ENCODE measurements at regions of chr2 and their contacts with region 1.

Region 1: GRCh38 chr2:20635675-20636584 is 15.0 kb downstream of the HS1BP3 start:
- DNase-seq: peak; percentile 74
- ATAC-seq: peak; percentile 96
- H3K4me3 ChIP-seq: no peak overlapping the region; a peak in 1 of 6 replicates
- H3K27ac ChIP-seq: peak overlapping the region; percentile 23
- H3K4me1 ChIP-seq: peaks cover 55% of the 10 kb centered on the region
- H3K27me3 ChIP-seq: no peaks in the 10 kb centered on the region
- CTCF ChIP-seq: peak; percentile 100
- EP300 ChIP-seq: peak in 1 of 2 experiments; percentile 29; a peak in 1 of 4 replicates
- POLR2A ChIP-seq: no peak
- RAD21 ChIP-seq: peak; percentile 100

Region 2: DNA sequence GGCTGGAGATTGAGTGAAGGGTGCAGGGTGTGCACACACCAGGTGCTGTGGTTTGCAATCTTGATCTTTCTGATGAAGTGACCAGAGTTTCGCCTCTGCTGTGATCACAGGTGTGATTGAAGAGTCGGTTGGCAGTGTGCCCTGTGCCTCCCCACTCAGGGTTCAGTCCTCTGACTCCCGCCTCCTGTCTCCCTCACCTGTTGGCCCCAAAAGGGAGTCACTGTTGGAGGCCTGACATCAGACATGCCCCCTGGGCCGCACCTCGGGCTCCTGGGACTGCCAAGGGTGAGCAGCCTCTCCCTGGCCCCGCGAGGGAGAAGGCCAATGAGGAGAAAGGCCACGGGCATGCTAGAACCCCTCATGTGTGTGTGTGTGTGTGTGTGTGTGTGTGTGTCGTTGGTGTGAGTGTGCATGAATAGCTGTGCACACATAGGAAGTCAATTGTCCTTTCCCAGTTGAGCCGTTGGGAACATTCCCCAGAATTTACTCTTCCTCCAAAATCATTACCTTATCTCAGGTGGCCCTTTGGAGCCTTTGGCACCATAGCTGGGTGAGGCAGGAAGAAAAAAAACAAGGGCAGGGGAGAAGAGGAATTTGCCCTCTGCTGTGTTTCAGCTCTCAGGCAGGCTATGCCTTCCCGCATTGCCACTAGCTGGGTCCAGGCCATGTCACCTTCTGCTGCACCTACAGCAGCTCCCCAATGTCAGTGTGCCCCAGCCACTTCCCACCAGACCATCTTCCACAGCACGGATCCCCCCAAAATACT is 506.4 kb before region 1 on chr2:
- CTCF ChIA-PET with region 1: no interaction called
- POLR2A ChIA-PET with region 1: no interaction called
- in situ Hi-C with region 1: no loop called
- intact Hi-C with region 1: no loop called
- DNase-seq: no peak
- ATAC-seq: peak; percentile 74
- H3K4me3 ChIP-seq: peak overlapping the region in 1 of 3 experiments; percentile 19; a peak in 1 of 6 replicates
- H3K27ac ChIP-seq: no peak overlapping the region
- H3K4me1 ChIP-seq: peaks cover 26% of the 10 kb centered on the region
- H3K27me3 ChIP-seq: peaks cover 0 to 51% of the 10 kb centered on the region in 2 experiments; a peak in 4 of 5 replicates
- CTCF ChIP-seq: no peak
- EP300 ChIP-seq: no peak
- POLR2A ChIP-seq: no peak
- RAD21 ChIP-seq: no peak

Region 3: GRCh38 chr2:20411361-20411894 is 224.5 kb before region 1 on chr2:
- CTCF ChIA-PET with region 1: interaction called, 26 read pairs
- POLR2A ChIA-PET with region 1: interaction called, 18 read pairs
- in situ Hi-C with region 1: no loop called
- intact Hi-C with region 1: loop called (anchors 1 kb)
- DNase-seq: peak; percentile 79
- ATAC-seq: peak; percentile 99
- H3K4me3 ChIP-seq: no peak overlapping the region
- H3K27ac ChIP-seq: no peak overlapping the region
- H3K4me1 ChIP-seq: peaks cover 36% of the 10 kb centered on the region
- H3K27me3 ChIP-seq: no peaks in the 10 kb centered on the region; a peak in 1 of 5 replicates
- CTCF ChIP-seq: peak; percentile 97
- EP300 ChIP-seq: no peak
- POLR2A ChIP-seq: no peak
- RAD21 ChIP-seq: peak; percentile 86

Region 4: GRCh38 chr2:20452551-20452950 is 183.4 kb before region 1 on chr2:
- CTCF ChIA-PET with region 1: interaction called, 5 read pairs
- POLR2A ChIA-PET with region 1: interaction called, 84 read pairs
- in situ Hi-C with region 1: loop called (anchors 5 kb)
- intact Hi-C with region 1: no loop called
- DNase-seq: peak; percentile 65
- ATAC-seq: peak; percentile 27
- H3K4me3 ChIP-seq: no peak overlapping the region
- H3K27ac ChIP-seq: no peak overlapping the region
- H3K4me1 ChIP-seq: peaks cover 57% of the 10 kb centered on the region
- H3K27me3 ChIP-seq: no peaks in the 10 kb centered on the region; a peak in 1 of 5 replicates
- CTCF ChIP-seq: peak; percentile 73
- EP300 ChIP-seq: no peak
- POLR2A ChIP-seq: no peak
- RAD21 ChIP-seq: peak; percentile 53

Region 5: GRCh38 chr2:20525041-20526035 is 110.6 kb before region 1 on chr2:
- CTCF ChIA-PET with region 1: no interaction called
- POLR2A ChIA-PET with region 1: interaction called, 6 read pairs
- in situ Hi-C with region 1: no loop called
- intact Hi-C with region 1: loop called (anchors 5 kb)
- DNase-seq: peak; percentile 96
- ATAC-seq: peak; percentile 96
- H3K4me3 ChIP-seq: peak overlapping the region; percentile 2 to 56 (median 21); a peak in 5 of 6 replicates
- H3K27ac ChIP-seq: peak overlapping the region; percentile 69
- H3K4me1 ChIP-seq: peaks cover 81% of the 10 kb centered on the region
- H3K27me3 ChIP-seq: no peaks in the 10 kb centered on the region
- CTCF ChIP-seq: peak; percentile 80
- EP300 ChIP-seq: peak; percentile 48 to 53; a peak in 3 of 4 replicates
- POLR2A ChIP-seq: peak in 1 of 2 experiments; percentile 70; a peak in 2 of 4 replicates
- RAD21 ChIP-seq: peak; percentile 82

Region 6: DNA sequence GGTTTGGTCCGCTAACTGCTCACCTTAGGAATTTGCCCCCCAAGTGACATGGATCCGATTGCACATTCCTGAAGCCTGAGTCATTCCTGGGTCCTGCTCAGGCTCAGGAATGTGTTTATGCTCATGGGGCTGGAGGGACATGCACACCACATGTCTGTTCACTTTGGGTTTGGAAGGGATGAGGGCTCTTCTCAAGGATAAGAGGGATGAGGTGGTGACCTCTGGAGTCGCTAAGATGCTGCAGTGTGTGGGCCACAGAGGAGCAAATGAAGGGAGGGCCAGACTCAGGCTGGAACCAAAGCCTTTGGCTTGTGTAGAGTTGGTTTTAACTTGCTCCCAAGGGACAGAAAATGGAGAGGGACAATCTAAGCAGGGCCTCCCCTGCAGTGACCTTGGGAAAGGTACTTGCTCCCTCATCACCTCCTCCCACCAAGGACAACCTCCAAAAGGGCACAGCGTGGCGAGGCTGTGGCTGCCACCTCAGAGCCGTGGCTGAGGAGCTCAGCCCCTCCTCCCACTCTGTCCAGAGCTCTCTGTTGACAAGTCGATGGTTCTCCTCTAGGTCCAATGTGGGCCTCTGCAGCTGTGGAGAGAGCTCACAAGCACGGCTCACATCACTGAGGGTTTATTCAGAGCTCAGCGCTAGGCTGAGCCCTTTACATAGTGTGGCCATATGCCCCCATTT is 51.2 kb before region 1 on chr2:
- CTCF ChIA-PET with region 1: no interaction called
- POLR2A ChIA-PET with region 1: interaction called, 14 read pairs
- in situ Hi-C with region 1: no loop called
- intact Hi-C with region 1: loop called (anchors 2 kb)
- DNase-seq: peak; percentile 98
- ATAC-seq: peak; percentile 79
- H3K4me3 ChIP-seq: peak overlapping the region in 1 of 3 experiments; percentile 52; a peak in 2 of 6 replicates
- H3K27ac ChIP-seq: peak overlapping the region; percentile 97
- H3K4me1 ChIP-seq: peaks cover 100% of the 10 kb centered on the region
- H3K27me3 ChIP-seq: no peaks in the 10 kb centered on the region
- CTCF ChIP-seq: peak; percentile 41; the same call in 1 of the 2 replicates
- EP300 ChIP-seq: peak; percentile 63 to 88; a peak in 3 of 4 replicates
- POLR2A ChIP-seq: peak in 1 of 2 experiments; percentile 73; a peak in 1 of 4 replicates
- RAD21 ChIP-seq: peak; percentile 58

Region 7: GRCh38 chr2:20600756-20601325 is 35.1 kb before region 1 on chr2:
- CTCF ChIA-PET with region 1: interaction called, 18 read pairs
- POLR2A ChIA-PET with region 1: interaction called, 30 read pairs
- in situ Hi-C with region 1: no loop called
- intact Hi-C with region 1: loop called (anchors 1 kb)
- DNase-seq: no peak
- ATAC-seq: no peak
- H3K4me3 ChIP-seq: no peak overlapping the region
- H3K27ac ChIP-seq: peak overlapping the region; percentile 68
- H3K4me1 ChIP-seq: peaks cover 55% of the 10 kb centered on the region
- H3K27me3 ChIP-seq: no peaks in the 10 kb centered on the region
- CTCF ChIP-seq: 0 out of 2 replicates have a peak, but pooled peaks have one; percentile 27
- EP300 ChIP-seq: no peak
- POLR2A ChIP-seq: no peak
- RAD21 ChIP-seq: no peak; the same call in 1 of the 2 replicates

Region 8: DNA sequence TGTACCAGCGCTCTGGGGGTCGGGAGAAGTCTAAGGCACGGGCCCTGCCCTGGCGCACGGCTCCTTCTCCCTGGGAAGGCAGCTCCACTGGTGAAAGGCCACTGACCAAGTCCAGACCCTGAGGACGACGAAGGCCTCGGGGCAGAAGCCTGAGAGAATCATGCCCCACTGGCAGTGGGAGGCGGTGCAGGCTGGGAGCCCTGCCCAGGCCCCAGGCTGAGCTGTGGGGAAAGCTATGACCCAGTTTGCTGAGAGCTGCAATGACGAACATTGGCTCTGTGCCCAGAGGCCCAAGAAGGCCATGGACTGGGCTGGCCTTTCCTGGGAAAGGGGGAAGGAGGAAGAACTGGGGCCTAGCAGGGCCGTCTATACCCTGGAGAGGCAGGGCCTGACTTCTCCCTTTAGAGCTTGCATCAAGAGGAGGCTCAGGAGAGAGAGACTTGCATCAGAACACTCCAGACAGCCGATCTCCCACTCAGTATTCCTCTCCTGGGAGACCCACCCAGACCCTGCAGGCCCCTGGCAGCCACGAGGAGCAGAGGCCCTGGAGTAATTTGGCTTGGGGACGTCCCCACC is 17.9 kb before region 1 on chr2:
- CTCF ChIA-PET with region 1: interaction called, 3 read pairs
- POLR2A ChIA-PET with region 1: interaction called, 15 read pairs
- in situ Hi-C with region 1: no loop called
- intact Hi-C with region 1: no loop called
- DNase-seq: peak; percentile 94
- ATAC-seq: peak; percentile 92
- H3K4me3 ChIP-seq: no peak overlapping the region
- H3K27ac ChIP-seq: peak overlapping the region; percentile 95
- H3K4me1 ChIP-seq: peaks cover 63% of the 10 kb centered on the region
- H3K27me3 ChIP-seq: no peaks in the 10 kb centered on the region
- CTCF ChIP-seq: peak; percentile 60
- EP300 ChIP-seq: peak; percentile 49 to 56; a peak in 2 of 4 replicates
- POLR2A ChIP-seq: peak in 1 of 2 experiments; percentile 53; a peak in 1 of 4 replicates
- RAD21 ChIP-seq: peak; percentile 92

Region 9: DNA sequence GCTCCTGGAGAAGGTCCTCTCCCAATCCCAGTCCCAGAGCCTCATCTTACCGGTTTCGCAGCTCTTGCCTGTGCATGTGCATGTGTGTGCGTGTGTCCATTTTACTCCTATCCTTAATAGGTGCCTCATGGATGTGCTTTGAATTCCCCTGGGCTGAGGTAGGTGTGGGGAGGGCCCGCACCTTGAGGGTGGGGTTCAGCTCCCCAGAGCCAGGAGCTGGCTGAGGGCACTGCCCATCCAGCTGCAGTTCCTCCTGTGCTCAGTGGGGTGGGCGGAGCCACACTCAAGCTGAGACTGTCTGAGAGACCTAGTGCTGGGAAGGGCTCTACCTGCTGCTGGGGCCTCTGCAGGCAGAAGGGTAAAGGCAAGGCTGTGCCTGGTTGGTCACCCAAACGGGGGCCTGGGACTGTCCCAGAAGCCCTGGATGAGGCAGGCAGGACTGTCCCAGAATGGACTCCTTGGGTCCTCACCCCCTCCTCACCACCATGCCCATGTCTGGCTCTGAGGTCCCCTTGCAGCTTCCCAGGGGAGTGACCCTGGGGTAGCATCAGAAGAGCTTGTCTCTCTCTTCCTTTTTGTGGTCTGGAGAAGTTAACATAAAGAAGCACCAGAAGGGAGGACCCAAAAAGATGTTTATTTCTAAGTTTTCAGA is 39.9 kb after region 1 on chr2:
- CTCF ChIA-PET with region 1: no interaction called
- POLR2A ChIA-PET with region 1: no interaction called
- in situ Hi-C with region 1: no loop called
- intact Hi-C with region 1: no loop called
- DNase-seq: peak; percentile 78
- ATAC-seq: peak; percentile 87
- H3K4me3 ChIP-seq: peak overlapping the region; percentile 7 to 64 (median 36); a peak in 3 of 6 replicates
- H3K27ac ChIP-seq: peak overlapping the region; percentile 75
- H3K4me1 ChIP-seq: peaks cover 44% of the 10 kb centered on the region
- H3K27me3 ChIP-seq: no peaks in the 10 kb centered on the region
- CTCF ChIP-seq: no peak
- EP300 ChIP-seq: 0 out of 4 replicates have a peak, but pooled peaks of 1 of the 2 experiments have one; percentile 7
- POLR2A ChIP-seq: 0 out of 4 replicates have a peak, but pooled peaks of 1 of the 2 experiments have one; percentile 19
- RAD21 ChIP-seq: peak; percentile 12; the same call in 1 of the 2 replicates